Mammary epithelial cell (primary cell): ENCODE measurements at regions of chr17 and their contacts with region 1.

Region 1: DNA sequence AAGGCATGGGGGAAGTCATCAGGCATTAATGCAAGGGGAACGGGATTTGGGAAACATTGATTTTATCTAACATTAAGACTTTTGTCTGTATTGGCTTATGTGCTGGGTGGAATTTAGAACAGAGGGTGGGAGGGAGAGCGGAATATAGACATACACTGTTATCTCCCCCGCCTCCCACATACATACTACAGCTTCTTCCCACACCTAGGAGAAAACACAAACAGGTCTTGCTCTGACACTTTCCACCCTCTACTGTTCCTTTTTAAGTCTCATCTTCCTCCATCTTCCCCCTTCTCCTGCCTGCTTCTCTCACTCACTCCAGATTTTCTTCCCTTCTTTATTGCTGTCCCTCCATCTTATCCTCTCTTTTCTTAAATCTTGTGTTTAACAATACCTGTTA is 425 bp downstream of the OR4D1 start:
- DNase-seq: no peak
- H3K4me3 ChIP-seq: no peak overlapping the region
- H3K27ac ChIP-seq: no peak overlapping the region
- H3K4me1 ChIP-seq: no peaks in the 10 kb centered on the region
- H3K27me3 ChIP-seq: peaks cover 5% of the 10 kb centered on the region
- CTCF ChIP-seq: no peak

Region 2: GRCh38 chr17:57518587-57519581 is 629.7 kb before region 1 on chr17:
- CTCF ChIA-PET with region 1: no interaction called
- dilution Hi-C with region 1: no loop called
- in situ Hi-C with region 1: no loop called
- intact Hi-C with region 1: no loop called
- DNase-seq: peak; percentile 17
- H3K4me3 ChIP-seq: no peak overlapping the region
- H3K27ac ChIP-seq: no peak overlapping the region
- H3K4me1 ChIP-seq: peaks cover 31% of the 10 kb centered on the region
- H3K27me3 ChIP-seq: no peaks in the 10 kb centered on the region
- CTCF ChIP-seq: no peak

Region 3: GRCh38 chr17:58043221-58044181 is 105.1 kb before region 1 on chr17:
- CTCF ChIA-PET with region 1: no interaction called
- dilution Hi-C with region 1: loop called (anchors 5 kb)
- in situ Hi-C with region 1: no loop called
- intact Hi-C with region 1: no loop called
- DNase-seq: no peak
- H3K4me3 ChIP-seq: no peak overlapping the region
- H3K27ac ChIP-seq: no peak overlapping the region
- H3K4me1 ChIP-seq: peaks cover 8% of the 10 kb centered on the region
- H3K27me3 ChIP-seq: no peaks in the 10 kb centered on the region
- CTCF ChIP-seq: no peak